Left cardiac atrium (tissue), 4 donors: ENCODE measurements at regions of chr5 and their contacts with region 1.

Region 1: DNA sequence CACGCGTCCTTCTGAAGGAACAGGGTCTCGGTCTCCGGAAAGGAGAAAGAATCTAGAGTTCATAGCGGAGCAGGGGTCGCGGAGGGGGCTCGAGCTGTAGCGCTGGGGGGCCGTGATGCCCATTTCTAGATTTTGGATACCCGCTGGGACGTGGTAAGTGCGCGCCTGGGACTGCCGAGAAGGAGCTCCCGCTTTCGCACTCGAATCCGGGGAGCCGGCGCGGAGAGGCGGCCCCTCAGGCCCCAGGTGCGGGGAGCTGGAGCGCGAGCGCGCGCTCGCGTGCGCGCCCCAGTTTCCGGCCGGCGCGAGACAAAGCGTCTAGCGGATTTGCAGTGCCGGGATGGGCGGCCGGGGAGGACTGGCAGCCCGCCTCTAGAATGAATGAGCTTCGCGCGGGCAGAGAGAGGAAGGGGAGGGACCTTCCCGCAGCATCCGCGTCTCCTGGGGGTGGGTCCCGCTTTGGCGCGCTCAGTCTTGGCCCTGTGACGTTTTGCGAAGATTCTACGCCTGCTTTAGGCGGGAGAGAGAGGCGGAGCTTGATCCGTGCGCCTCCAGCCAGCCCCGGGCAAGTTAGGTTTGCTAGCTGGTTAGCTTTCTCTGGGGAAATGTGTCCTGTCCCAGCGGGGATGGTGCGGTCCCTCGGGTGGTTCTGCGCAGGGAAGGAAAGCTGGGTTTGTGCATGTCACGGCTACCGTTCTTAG is 1.2 kb downstream of the LMNB1 start:
- DNase-seq: peak; percentile 91
- ATAC-seq: peak; percentile 72 to 88

Region 2: GRCh38 chr5:126656396-126657007 is 121.6 kb before region 1 on chr5:
- intact Hi-C with region 1: loop called (anchors 5 kb)
- DNase-seq: no peak
- ATAC-seq: no peak

Region 3: DNA sequence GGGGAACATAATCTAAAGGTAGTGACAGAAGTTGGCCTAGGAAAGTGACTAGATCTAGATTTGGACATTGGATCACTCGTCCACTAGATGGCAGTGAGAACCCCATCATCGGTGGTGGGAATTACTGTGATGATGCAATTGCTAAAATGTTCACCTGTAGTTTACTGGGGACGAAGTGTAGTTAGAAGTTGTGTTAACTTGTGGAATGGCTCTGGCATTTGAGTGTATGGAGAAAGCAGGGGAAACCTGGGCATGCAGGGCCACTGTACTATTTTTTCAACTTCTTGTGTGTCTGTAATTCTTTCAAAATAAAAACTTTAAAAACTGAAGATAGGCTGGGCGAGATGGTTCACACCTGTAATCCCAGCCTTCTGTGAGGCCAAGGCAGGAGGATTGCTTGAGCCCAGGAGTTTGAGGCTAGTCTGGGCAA is 101.9 kb before region 1 on chr5:
- intact Hi-C with region 1: loop called (anchors 2 kb)
- DNase-seq: peak; percentile 31
- ATAC-seq: peak; percentile 70 to 78

Region 4: GRCh38 chr5:126917918-126918614 is 139.9 kb after region 1 on chr5:
- intact Hi-C with region 1: no loop called
- DNase-seq: no peak
- ATAC-seq: no peak